ENCODE measurements at regions of chr2 and their contacts with region 1.

Region 1: DNA sequence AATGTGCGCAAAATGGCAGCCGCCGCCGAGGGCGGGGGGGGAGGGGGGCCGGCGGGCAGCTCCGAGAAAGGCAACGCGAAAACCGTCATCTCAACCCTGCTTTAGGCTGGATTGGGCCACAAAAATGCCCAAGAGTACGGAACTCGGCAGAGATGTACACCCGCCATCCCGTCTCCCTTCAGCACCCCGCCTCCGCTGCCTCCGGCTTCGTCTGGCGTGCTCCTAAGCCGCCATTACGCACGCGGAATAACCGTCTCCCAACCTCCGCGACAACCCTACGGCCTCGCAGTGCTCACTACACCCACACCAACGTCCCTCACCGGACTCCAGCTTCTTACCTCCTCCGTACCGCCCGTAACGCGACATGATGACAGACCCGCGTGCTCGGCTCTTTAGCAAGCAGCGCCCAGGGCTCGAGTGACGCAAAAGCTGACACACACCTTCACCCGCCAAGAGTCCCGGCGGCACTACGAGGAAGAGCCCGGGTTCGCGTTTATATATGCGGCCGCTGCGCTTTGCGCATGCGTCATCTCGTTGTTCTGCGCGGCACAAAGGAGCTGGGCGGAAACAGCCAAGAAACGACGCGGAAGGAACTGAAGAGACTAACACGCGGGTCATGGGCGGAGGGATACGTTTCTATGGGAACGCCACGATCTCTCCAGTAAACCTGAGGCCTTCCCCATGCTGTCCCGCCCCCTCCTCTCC is at the start of gene SRSF7:
- DNase-seq: peak; percentile 99 to 100
- ATAC-seq: peak; percentile 87 to 90
- H3K4me3 ChIP-seq: peak within 1 kb of the TSS; percentile 84
- H3K27ac ChIP-seq: peak within 1 kb of the TSS; percentile 96 to 98
- H3K4me1 ChIP-seq: peaks cover 40% of the 10 kb centered on the region
- CTCF ChIP-seq: no peak
- EP300 ChIP-seq: no peak
- POLR2A ChIP-seq: peak; percentile 100
- RAD21 ChIP-seq: 0 out of 5 replicates have a peak, but pooled peaks of 1 of the 2 experiments have one; percentile 17
- polyA plus RNA-seq, gene SRSF7: 356 and 544 TPM in 2 replicates

Region 2: DNA sequence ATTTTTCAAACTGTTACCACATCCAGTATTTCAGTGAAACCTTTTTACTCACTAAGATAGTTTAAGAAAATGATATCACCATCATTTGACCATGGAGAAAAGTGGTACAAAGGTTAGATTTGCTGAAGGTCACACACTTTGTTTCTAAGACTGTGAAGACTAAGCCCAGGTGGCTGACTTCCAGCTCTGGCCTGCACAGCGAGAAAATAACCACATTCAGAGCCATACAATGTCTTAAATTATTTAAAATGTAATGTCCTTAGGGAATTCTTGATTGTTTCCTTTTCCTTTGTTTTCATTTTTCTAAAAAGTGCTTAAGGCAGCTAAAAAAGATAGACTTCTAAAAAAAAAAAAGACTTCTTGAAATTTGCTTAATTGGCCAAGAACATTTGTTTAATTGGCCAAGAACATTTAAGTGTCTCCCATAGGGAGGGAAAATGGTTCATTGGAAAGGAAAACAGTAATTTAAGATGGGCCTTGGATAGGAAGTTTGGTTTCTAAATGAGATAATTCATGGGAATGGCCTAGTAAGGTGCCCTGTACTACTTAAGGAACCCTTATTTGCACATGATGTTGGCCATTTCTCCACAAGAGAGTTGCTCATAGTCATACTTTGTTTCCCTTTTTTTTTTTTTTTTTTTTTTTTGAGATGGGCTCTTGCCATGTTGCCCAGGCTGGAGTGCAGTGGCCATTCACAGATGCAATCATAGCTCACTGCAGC is 720.2 kb before region 1 on chr2:
- CTCF ChIA-PET with region 1: no interaction called
- POLR2A ChIA-PET with region 1: no interaction called
- DNase-seq: no peak
- ATAC-seq: no peak
- H3K4me3 ChIP-seq: no peak overlapping the region
- H3K27ac ChIP-seq: no peak overlapping the region
- H3K4me1 ChIP-seq: no peaks in the 10 kb centered on the region
- CTCF ChIP-seq: no peak
- EP300 ChIP-seq: no peak
- POLR2A ChIP-seq: no peak
- RAD21 ChIP-seq: no peak

Region 3: DNA sequence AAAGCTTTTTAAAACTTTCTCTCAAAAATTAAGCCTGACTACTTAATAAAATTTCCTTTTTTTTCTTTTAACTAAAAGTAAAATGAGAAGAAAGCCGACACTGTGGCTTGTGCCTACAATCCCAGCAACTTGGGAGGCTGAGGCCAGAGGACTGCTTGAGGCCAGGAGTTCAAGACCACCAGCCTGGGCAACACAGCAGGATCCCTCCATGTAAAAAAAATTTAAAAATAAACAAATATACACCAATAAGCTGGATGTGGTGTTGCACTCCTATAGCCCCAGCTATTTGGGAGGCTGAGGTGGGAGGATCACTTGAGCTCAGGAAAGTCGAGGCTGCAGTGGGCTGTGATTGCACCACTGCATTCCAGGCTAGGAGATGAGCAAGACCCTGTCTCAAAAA is 185.7 kb before region 1 on chr2:
- CTCF ChIA-PET with region 1: no interaction called
- POLR2A ChIA-PET with region 1: interaction called, 10 read pairs
- DNase-seq: no peak
- ATAC-seq: no peak
- H3K4me3 ChIP-seq: no peak overlapping the region
- H3K27ac ChIP-seq: no peak overlapping the region
- H3K4me1 ChIP-seq: 0 out of 3 replicates have a peak, but pooled peaks cover 3% of the 10 kb centered on the region
- CTCF ChIP-seq: no peak
- EP300 ChIP-seq: no peak
- POLR2A ChIP-seq: no peak
- RAD21 ChIP-seq: no peak

Region 4: GRCh38 chr2:38665854-38666555 is 85.0 kb before region 1 on chr2 and contains the start of gene GALM:
- CTCF ChIA-PET with region 1: no interaction called
- POLR2A ChIA-PET with region 1: interaction called, 15 read pairs
- DNase-seq: peak; percentile 86 to 91
- ATAC-seq: peak; percentile 91 to 96
- H3K4me3 ChIP-seq: peak within 1 kb of the TSS; percentile 54
- H3K27ac ChIP-seq: peak within 1 kb of the TSS; percentile 71 to 89
- H3K4me1 ChIP-seq: peaks cover 13% of the 10 kb centered on the region
- CTCF ChIP-seq: no peak
- EP300 ChIP-seq: no peak
- POLR2A ChIP-seq: peak; percentile 61
- RAD21 ChIP-seq: no peak; a peak in 1 of 5 replicates
- polyA plus RNA-seq, gene GALM: 34.1 and 34.2 TPM in 2 replicates

Region 5: GRCh38 chr2:38778687-38779082 is 27.6 kb after region 1 on chr2:
- CTCF ChIA-PET with region 1: interaction called, 3 read pairs
- POLR2A ChIA-PET with region 1: interaction called, 24 read pairs
- DNase-seq: no peak
- ATAC-seq: no peak
- H3K4me3 ChIP-seq: peak overlapping the region; percentile 78
- H3K27ac ChIP-seq: peak overlapping the region; percentile 83 to 90
- H3K4me1 ChIP-seq: peaks cover 6% of the 10 kb centered on the region; the same call in 2 of the 3 replicates
- CTCF ChIP-seq: no peak
- EP300 ChIP-seq: no peak
- POLR2A ChIP-seq: no peak
- RAD21 ChIP-seq: no peak

Region 6: GRCh38 chr2:38825956-38826355 is 74.9 kb after region 1 on chr2:
- CTCF ChIA-PET with region 1: no interaction called
- POLR2A ChIA-PET with region 1: interaction called, 36 read pairs
- DNase-seq: peak in 1 of 2 experiments; percentile 20
- ATAC-seq: peak; percentile 61 to 67; a peak in 3 of 6 replicates
- H3K4me3 ChIP-seq: no peak overlapping the region
- H3K27ac ChIP-seq: no peak overlapping the region
- H3K4me1 ChIP-seq: peaks cover 16% of the 10 kb centered on the region
- CTCF ChIP-seq: no peak
- EP300 ChIP-seq: no peak
- POLR2A ChIP-seq: no peak
- RAD21 ChIP-seq: 0 out of 5 replicates have a peak, but pooled peaks of 1 of the 2 experiments have one; percentile 13

Region 7: DNA sequence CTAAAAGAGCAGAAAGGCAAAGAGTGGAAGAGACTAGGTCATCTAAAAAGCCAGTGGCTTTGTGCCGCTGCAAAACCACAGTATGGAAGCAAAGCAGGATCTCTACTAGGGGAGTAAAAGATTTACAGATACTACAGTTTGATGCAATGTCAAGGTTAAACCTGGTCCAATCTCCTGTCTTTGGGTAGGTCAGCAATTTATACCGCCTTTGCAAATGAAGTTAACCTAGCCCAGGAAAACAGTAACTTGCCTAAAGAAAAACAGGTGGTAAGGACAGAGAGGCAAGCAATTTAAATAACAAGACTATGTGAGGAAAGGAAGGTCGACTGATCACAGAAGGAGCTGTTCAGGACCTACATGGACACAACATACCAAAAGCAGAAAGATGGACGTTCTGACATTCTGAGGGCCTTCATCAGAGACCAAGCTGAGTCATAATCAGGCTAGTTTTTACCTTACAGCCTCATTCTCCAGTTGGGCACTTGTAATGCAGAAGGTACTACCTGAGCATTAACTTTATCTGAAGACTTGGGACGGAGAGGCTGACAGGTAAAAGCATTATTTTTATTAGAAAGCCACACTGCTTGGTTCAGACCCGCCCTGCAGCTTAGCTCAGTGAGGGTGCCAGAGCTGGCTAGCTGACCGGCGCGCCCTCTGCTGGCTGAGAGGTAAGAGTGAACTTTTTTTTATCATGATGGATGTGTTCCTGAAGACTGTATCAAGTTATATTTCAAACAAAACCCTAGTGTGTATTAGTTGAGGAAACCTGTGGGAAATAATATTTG is 476.8 kb after region 1 on chr2:
- CTCF ChIA-PET with region 1: no interaction called
- POLR2A ChIA-PET with region 1: interaction called, 13 read pairs
- DNase-seq: peak; percentile 76 to 79
- ATAC-seq: peak; percentile 84 to 92
- H3K4me3 ChIP-seq: no peak overlapping the region
- H3K27ac ChIP-seq: peak overlapping the region; percentile 19 to 26; a peak in 2 of 6 replicates
- H3K4me1 ChIP-seq: no peaks in the 10 kb centered on the region
- CTCF ChIP-seq: peak; percentile 97
- EP300 ChIP-seq: no peak
- POLR2A ChIP-seq: no peak
- RAD21 ChIP-seq: peak; percentile 85 to 88

Measured in A549 (cell line).